ENCODE measurements at regions of chrX and their contacts with region 1.

Region 1: GRCh38 chrX:73855546-73855945 is 292.5 kb downstream of the CHIC1 start:
- DNase-seq: peak; percentile 34 to 89 (median 80)

Region 2: DNA sequence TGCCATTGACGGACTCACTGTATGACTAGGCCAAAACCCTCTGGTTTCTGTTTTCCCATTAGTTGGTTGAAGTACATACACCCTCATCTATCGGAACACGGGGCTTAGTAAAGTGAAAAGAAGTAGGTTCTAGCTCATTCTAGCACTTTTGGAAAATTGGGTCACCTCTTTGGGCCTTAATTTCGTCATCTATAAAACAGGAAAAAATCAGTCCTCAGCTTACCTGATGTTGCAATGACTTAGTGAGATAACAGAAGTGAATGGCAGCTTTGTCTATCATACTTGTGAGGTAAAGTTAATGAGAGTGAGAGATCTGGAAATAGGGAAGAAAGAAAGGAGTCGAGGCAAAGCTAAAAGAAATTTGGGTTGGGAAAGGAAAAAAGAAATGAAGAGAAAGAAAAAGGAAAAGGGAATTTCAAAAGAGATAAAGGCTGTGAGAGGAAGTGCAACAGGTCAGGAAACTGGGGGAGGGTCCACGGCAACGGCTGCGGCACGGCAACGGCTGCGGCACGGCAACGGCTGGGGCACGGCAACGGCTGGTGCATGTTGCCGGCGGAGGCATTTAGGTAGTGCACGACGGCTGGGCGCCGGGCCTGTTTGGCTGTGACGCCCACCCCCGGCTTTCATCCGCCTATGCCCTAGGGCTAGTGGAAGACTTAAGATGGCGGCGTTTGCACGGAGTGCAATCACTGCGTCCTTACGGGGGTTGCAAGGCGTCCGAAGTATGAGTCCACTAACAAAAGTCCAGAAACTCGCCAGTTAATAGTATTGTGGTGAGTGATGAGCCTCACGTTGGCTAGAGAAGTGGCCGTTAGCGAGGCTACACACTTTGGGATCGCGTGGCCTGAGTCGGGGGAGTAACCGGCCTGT is 88.4 kb after region 1 on chrX:
- intact Hi-C with region 1: loop called (anchors 10 kb)
- DNase-seq: peak; percentile 62 to 96 (median 92)

Region 3: GRCh38 chrX:74015379-74016019 is 160.0 kb after region 1 on chrX:
- intact Hi-C with region 1: loop called (anchors 5 kb)
- DNase-seq: peak in 41 of 42 donors; percentile 27 to 80 (median 61)

Region 4: GRCh38 chrX:74133156-74133796 is 277.7 kb after region 1 on chrX:
- intact Hi-C with region 1: loop called (anchors 5 kb)
- DNase-seq: peak in 15 of 42 donors; percentile 2 to 65 (median 36)